Activated CD8-positive, alpha-beta memory T cell treated with anti-CD3 and anti-CD28 coated beads, Interleukin-2, amount 10 ng/mL, durations not matched to agents 7 days and 5 days (primary cell): ENCODE measurements at regions of chr11 and their contacts with region 1.

Region 1: DNA sequence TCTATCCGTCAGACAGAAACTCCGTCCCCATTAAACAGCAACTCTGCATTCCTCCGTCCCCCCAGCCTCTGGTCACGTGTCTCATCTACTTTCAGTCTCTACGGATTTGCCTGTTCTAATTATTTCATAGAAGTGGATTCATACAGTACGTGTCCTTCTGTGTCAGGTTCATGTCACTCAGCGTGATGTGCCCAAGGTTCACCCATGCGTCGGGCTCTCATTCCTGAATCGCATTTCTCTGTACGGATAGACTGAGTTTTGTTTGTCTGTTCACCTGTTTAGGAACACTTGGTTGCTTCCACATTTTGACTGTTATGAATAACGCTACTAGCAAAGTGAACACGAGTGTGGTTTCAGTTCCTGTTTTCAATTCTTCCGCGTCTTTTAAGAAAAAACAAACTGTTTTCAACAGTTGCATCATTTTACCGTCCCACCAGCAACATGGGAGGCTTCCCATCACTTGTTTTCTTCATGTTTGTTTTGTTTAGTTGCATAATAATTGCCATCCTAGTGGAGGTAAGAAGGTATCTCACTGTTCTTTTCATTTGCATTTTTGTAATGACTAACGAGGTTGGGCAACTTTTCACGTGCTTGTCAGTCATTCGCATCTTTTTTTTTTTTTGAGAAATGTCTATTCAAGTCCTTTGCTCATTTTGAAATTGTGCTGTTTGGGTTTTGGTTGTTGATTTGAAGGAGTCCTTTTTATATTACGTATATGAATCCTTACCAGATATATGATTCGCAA is 8.9 kb upstream of the NLRP6 start:
- DNase-seq: peak; percentile 80
- ATAC-seq: peak; percentile 57
- H3K4me3 Mint-ChIP-seq: peak overlapping the region; percentile 86
- H3K27ac Mint-ChIP-seq: peak overlapping the region; percentile 97
- H3K4me1 Mint-ChIP-seq: peaks cover 32% of the 10 kb centered on the region
- H3K27me3 Mint-ChIP-seq: peaks cover 11% of the 10 kb centered on the region

Region 2: GRCh38 chr11:279966-280582 is 10.8 kb after region 1 on chr11:
- CTCF ChIA-PET with region 1: interaction called, 25 read pairs
- DNase-seq: peak; percentile 59
- ATAC-seq: peak; percentile 59
- H3K4me3 Mint-ChIP-seq: peak overlapping the region; percentile 50
- H3K27ac Mint-ChIP-seq: no peak overlapping the region
- H3K4me1 Mint-ChIP-seq: peaks cover 46% of the 10 kb centered on the region
- H3K27me3 Mint-ChIP-seq: peaks cover 61% of the 10 kb centered on the region

Region 3: GRCh38 chr11:288328-289144 is 19.2 kb after region 1 on chr11 and contains the start of gene PGGHG:
- CTCF ChIA-PET with region 1: interaction called, 10 read pairs
- DNase-seq: no peak
- ATAC-seq: peak; percentile 72
- H3K4me3 Mint-ChIP-seq: peak within 1 kb of the TSS; percentile 95
- H3K27ac Mint-ChIP-seq: peak within 1 kb of the TSS; percentile 94
- H3K4me1 Mint-ChIP-seq: peaks cover 44% of the 10 kb centered on the region
- H3K27me3 Mint-ChIP-seq: peaks cover 11% of the 10 kb centered on the region
- total RNA-seq, gene PGGHG: 214 to 229 TPM

Region 4: GRCh38 chr11:355581-356458 is 86.5 kb after region 1 on chr11:
- CTCF ChIA-PET with region 1: no interaction called
- DNase-seq: peak; percentile 88
- ATAC-seq: peak; percentile 70
- H3K4me3 Mint-ChIP-seq: peak overlapping the region; percentile 64
- H3K27ac Mint-ChIP-seq: peak overlapping the region; percentile 65
- H3K4me1 Mint-ChIP-seq: peaks cover 36% of the 10 kb centered on the region
- H3K27me3 Mint-ChIP-seq: peaks cover 30% of the 10 kb centered on the region